ENCODE measurements at regions of chr3 and their contacts with region 1.

Region 1: GRCh38 chr3:186849374-186849975 is 7.0 kb downstream of the ADIPOQ start:
- DNase-seq: no peak
- ATAC-seq: peak; percentile 88
- H3K4me3 Mint-ChIP-seq: no peak overlapping the region
- H3K27ac Mint-ChIP-seq: no peak overlapping the region
- H3K4me1 Mint-ChIP-seq: no peaks in the 10 kb centered on the region; the same call in 1 of the 2 replicates
- H3K27me3 Mint-ChIP-seq: no peaks in the 10 kb centered on the region; the same call in 1 of the 2 replicates
- CTCF ChIP-seq: no peak

Region 2: DNA sequence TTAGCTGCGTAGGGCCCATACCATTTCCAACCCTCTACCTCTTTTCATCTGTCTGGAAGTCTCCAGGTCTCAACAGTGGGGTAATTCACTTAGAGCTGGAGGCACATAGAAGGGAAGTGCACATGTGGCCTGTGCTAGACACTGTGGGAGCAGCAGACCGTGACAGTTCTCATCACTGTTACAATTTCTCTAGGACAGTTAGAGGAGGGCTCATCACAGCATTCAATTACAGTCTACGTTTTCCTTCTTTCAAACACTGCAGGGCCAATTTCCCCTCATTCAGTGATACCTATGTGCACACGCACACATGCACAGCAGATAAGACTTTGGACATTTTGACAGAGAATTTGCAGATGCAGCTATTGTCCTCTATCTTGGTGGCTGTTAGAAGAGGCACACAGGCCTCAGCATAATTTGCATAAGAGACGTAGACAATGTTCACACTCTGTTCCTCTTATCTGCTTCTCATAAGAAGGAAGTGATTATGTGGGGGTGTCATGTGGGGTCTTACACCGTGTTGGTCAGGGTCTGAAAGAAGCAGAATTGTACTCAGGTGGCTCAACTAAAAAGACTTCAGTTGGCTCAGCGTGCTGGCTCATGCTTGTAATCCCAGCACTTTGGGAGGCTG is 196.3 kb before region 1 on chr3:
- CTCF ChIA-PET with region 1: no interaction called
- POLR2A ChIA-PET with region 1: no interaction called
- DNase-seq: no peak
- ATAC-seq: no peak
- H3K4me3 Mint-ChIP-seq: no peak overlapping the region
- H3K27ac Mint-ChIP-seq: no peak overlapping the region
- H3K4me1 Mint-ChIP-seq: peaks cover 22% of the 10 kb centered on the region
- H3K27me3 Mint-ChIP-seq: peaks cover 9% of the 10 kb centered on the region; the same call in 1 of the 2 replicates
- CTCF ChIP-seq: no peak

Region 3: GRCh38 chr3:186938716-186939115 is 89.2 kb after region 1 on chr3:
- CTCF ChIA-PET with region 1: interaction called, 39 read pairs
- POLR2A ChIA-PET with region 1: no interaction called
- DNase-seq: no peak
- ATAC-seq: no peak
- H3K4me3 Mint-ChIP-seq: no peak overlapping the region
- H3K27ac Mint-ChIP-seq: peak overlapping the region; percentile 70
- H3K4me1 Mint-ChIP-seq: peaks cover 45% of the 10 kb centered on the region
- H3K27me3 Mint-ChIP-seq: no peaks in the 10 kb centered on the region
- CTCF ChIP-seq: no peak

Region 4: GRCh38 chr3:186965141-186965879 is 115.8 kb after region 1 on chr3:
- CTCF ChIA-PET with region 1: interaction called, 20 read pairs
- POLR2A ChIA-PET with region 1: no interaction called
- DNase-seq: peak; percentile 38
- ATAC-seq: peak; percentile 58
- H3K4me3 Mint-ChIP-seq: peak overlapping the region; percentile 39
- H3K27ac Mint-ChIP-seq: peak overlapping the region; percentile 98
- H3K4me1 Mint-ChIP-seq: peaks cover 78% of the 10 kb centered on the region
- H3K27me3 Mint-ChIP-seq: no peaks in the 10 kb centered on the region
- CTCF ChIP-seq: no peak

Region 5: DNA sequence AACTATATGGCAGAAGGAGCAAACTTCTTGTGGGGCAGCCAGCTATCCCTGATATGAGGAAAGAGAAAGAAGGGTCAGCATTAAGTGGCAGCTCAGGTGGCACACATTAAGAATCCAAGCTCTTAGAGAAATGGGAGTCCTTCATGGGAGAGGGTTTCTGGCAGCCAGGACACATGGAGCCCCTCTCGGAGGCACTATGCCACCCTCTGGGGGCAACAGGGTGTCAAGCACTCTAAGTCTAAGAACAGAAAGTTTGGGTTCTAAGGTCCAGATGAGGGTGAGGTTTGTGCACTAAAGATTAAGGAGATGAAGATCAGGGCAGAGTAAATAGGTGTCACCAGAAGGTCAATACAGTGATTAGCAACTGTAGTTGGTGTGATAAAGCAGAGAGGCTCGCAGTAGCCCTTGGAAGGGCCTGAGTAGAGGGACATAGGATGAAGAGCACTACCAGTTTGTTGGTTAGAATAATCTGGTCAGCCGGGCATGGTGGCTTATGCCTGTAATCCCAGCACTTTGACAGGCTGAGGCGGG is 170.1 kb after region 1 on chr3:
- CTCF ChIA-PET with region 1: interaction called, 13 read pairs
- POLR2A ChIA-PET with region 1: no interaction called
- DNase-seq: no peak
- ATAC-seq: peak; percentile 68
- H3K4me3 Mint-ChIP-seq: no peak overlapping the region
- H3K27ac Mint-ChIP-seq: peak overlapping the region; percentile 23
- H3K4me1 Mint-ChIP-seq: peaks cover 14% of the 10 kb centered on the region
- H3K27me3 Mint-ChIP-seq: no peaks in the 10 kb centered on the region
- CTCF ChIP-seq: no peak

Region 6: DNA sequence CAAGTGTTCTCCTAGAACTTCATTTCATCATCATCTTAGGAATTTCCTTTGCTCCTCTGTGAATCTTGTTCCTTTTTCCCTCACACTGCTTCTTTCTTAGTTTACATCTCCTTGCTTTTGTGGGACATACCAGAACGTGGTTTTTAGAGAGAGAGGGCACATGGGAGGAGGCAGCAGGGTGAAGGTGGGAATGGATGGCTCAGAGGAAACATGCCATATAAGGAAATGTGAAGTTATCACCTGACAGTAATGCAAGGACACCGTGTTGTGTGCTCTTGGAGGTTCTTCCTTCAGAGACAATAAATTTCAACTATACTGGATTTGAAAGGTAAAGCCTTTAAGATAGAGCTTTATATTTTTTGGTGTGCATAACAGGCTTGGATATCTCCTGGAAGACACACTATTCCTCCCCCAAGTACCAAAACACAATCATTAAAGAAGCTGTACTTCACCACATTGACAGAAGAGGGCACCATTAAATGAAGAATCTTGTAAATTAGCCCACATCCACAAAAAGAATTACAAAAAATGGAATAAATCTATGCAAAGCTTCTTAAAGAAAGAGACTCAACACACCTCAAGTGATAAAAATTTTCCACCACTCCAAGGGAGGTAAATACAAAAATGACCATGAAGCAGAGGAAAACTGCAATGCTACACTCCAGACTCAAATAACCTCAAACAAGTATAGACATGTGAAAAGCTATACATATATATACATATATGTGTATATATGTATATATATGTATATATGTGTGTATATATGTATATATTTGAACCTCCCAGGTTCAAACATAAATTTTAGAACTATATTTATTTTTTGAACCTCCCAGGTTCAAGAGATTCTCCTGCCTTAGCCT is 263.7 kb after region 1 on chr3:
- CTCF ChIA-PET with region 1: interaction called, 17 read pairs
- POLR2A ChIA-PET with region 1: no interaction called
- DNase-seq: no peak
- ATAC-seq: peak; percentile 86
- H3K4me3 Mint-ChIP-seq: no peak overlapping the region
- H3K27ac Mint-ChIP-seq: no peak overlapping the region
- H3K4me1 Mint-ChIP-seq: peaks cover 7% of the 10 kb centered on the region
- H3K27me3 Mint-ChIP-seq: no peaks in the 10 kb centered on the region
- CTCF ChIP-seq: peak; percentile 16

Region 7: GRCh38 chr3:187150599-187150998 is 301.1 kb after region 1 on chr3:
- CTCF ChIA-PET with region 1: interaction called, 16 read pairs
- POLR2A ChIA-PET with region 1: no interaction called
- DNase-seq: peak; percentile 57
- ATAC-seq: peak; percentile 64
- H3K4me3 Mint-ChIP-seq: no peak overlapping the region
- H3K27ac Mint-ChIP-seq: peak overlapping the region; percentile 91
- H3K4me1 Mint-ChIP-seq: peaks cover 39% of the 10 kb centered on the region
- H3K27me3 Mint-ChIP-seq: no peaks in the 10 kb centered on the region
- CTCF ChIP-seq: no peak; the same call in 1 of the 2 replicates

Measured in WTC11 (cell line).